HEK293T (cell line): ENCODE measurements at regions of chr12 and their contacts with region 1.

Region 1: GRCh38 chr12:123365025-123365917 is 624 bp upstream of the SBNO1 start:
- DNase-seq: peak; percentile 98

Region 2: GRCh38 chr12:123384318-123384993 is 19.2 kb after region 1 on chr12:
- CTCF ChIA-PET with region 1: interaction called, 10 read pairs
- POLR2A ChIA-PET with region 1: interaction called, 18 read pairs
- DNase-seq: no peak